Caco-2 (cell line): ENCODE measurements at regions of chr4 and their contacts with region 1.

Region 1: DNA sequence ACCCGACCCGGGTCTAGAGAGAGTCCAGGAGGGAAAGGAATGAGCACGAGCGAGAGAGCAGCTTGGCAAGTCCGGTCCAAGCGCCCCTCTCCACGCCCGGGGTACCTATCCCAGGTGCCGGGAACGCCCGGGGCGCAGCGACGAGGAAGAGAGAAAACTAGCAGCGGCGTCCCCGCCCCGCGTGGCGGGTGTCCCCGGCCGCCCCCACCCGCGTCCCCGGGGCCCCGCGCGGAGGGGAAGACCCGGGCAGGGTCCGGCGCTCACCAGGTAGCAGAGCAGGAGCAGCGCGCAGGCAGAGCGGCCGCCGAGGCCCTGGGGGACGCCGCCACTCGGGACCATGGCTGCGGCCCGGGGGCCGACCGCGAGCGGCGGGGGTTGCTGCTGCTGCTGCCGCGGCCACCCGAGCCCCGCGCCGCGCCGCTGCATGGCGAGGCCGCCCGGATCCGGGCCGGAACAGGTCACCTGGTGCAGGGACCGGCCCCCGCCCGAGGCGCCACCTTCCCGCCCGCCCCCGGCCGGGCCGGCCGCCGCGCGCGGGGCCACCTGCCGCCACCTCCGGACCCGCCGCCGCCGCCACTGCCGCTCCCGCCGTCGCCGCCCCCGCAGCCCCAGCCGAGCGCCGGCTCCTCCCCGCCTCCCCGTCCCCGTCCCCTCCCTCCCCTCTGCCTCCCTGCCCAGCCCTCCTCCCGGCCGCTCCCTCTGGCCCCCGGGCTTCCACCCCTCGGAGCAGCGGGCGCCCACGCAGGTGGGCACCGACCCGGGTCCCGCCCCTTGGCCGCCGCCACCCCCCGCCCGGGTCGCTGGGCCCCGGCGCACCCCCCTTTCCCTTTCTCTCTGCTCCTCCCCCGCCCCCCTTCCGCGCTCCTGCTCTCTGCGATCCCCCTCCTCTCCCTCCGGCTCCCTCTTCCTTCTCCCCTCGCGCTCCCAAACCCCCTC is at the start of gene SEL1L3:
- DNase-seq: peak; percentile 50 to 73
- H3K4me3 ChIP-seq: peak within 1 kb of the TSS; percentile 50
- H3K4me3 Mint-ChIP-seq: peak within 1 kb of the TSS; percentile 88
- H3K27ac Mint-ChIP-seq: peak within 1 kb of the TSS; percentile 58
- H3K4me1 ChIP-seq: peaks cover 9% of the 10 kb centered on the region; the same call in 1 of the 2 replicates
- H3K4me1 Mint-ChIP-seq: peaks cover 18% of the 10 kb centered on the region
- H3K27me3 ChIP-seq: no peaks in the 10 kb centered on the region
- H3K27me3 Mint-ChIP-seq: no peaks in the 10 kb centered on the region
- CTCF ChIP-seq: no peak
- total RNA-seq, gene SEL1L3: 15.3 and 15.7 TPM in 2 replicates

Region 2: DNA sequence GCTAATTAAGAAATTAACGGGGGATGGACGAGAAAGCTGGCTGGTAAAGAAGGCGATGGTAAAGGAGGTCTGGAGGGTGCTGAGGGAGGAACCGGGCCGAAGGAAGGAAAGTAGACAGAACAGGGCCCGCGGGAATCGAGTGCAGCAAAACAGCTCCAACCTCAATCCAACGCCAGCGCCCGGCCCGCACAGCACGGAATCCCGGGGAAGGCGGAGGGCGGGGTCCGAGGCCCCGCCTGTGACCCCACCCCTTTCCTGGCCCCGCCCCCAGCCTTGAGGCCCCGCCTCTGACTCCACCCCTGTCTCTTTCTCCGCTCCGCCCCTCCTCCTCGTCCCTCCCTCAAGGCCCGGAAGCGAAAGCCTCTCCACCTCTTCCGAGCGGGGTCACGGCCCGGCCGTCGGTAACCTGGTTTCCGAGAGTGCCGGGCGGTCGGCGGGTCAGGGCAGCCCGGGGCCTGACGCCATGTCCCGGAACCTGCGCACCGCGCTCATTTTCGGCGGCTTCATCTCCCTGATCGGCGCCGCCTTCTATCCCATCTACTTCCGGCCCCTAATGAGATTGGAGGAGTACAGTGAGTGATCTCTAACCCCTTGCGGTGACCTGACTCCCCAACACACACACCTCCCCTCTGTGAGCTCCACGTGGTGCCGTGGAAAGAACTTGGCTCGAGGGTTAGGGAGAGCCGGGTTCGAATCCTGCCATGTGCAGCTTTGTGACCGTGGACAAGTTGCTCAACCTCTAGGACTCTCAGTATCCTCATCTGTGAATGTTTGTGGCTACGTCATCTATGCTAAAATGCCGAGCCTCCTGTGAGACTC is 51.4 kb after region 1 on chr4 and contains the start of gene SMIM20:
- CTCF ChIA-PET with region 1: no interaction called
- POLR2A ChIA-PET with region 1: interaction called, 4 read pairs
- intact Hi-C with region 1: loop called (anchors 5 kb)
- DNase-seq: peak; percentile 92 to 93
- H3K4me3 ChIP-seq: peak within 1 kb of the TSS; percentile 76
- H3K4me3 Mint-ChIP-seq: peak within 1 kb of the TSS; percentile 82
- H3K27ac Mint-ChIP-seq: peak within 1 kb of the TSS; percentile 94
- H3K4me1 ChIP-seq: peaks cover 1% of the 10 kb centered on the region; the same call in 1 of the 2 replicates
- H3K4me1 Mint-ChIP-seq: no peaks in the 10 kb centered on the region
- H3K27me3 ChIP-seq: no peaks in the 10 kb centered on the region
- H3K27me3 Mint-ChIP-seq: peaks cover 2% of the 10 kb centered on the region
- CTCF ChIP-seq: no peak
- total RNA-seq, gene SMIM20: 18.5 and 20.1 TPM in 2 replicates